Mammary epithelial cell (primary cell): ENCODE measurements at regions of chr7 and their contacts with region 1.

Region 1: DNA sequence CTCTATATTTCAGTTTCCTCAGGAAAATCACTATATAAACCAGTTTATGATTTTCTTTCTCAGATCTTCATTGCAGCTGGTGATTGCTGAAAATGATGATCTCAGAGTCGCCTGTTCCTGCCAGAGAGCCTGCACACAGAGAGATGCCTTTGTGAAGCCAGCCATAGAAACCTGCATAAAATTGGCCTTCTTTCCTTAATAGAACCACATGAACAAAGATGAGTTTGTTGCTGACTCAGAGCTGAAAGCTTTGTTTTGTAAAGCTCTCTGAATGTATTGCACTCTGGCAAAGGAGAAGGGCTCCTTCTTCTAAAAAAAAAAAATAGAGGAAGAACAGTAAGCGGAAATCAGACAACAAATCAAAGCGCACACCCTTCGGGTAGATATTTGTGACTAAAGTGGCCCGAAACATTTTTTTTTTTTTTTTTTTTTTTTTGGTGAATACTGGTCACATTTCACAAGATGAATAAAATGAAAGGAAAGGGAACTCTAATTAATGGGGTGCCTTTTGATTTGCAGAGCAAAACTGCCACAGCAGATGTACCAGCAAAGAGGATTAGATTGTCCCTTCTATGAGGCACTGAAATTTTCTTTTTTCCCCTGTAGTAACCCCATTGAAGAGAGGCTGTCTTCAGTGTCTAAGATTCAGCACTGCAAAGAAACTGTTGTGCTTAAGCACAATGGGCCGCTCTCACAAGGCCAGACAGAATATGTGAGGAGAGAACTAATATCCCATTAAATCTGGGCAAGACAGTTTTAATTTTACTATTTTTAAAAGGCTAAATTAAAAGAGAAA is 75.1 kb upstream of the PTPRZ1 start:
- DNase-seq: peak; percentile 86
- H3K4me3 ChIP-seq: peak overlapping the region in 1 of 3 experiments; percentile 6
- H3K27ac ChIP-seq: peak overlapping the region; percentile 96
- H3K4me1 ChIP-seq: peaks cover 64% of the 10 kb centered on the region
- H3K27me3 ChIP-seq: no peaks in the 10 kb centered on the region
- CTCF ChIP-seq: no peak

Region 2: GRCh38 chr7:121752706-121753105 is 45.1 kb before region 1 on chr7:
- CTCF ChIA-PET with region 1: interaction called, 44 read pairs
- dilution Hi-C with region 1: no loop called
- in situ Hi-C with region 1: no loop called
- intact Hi-C with region 1: no loop called
- DNase-seq: no peak
- H3K4me3 ChIP-seq: no peak overlapping the region
- H3K27ac ChIP-seq: no peak overlapping the region
- H3K4me1 ChIP-seq: peaks cover 3% of the 10 kb centered on the region
- H3K27me3 ChIP-seq: no peaks in the 10 kb centered on the region
- CTCF ChIP-seq: peak in 1 of 2 donors; percentile 49